T-cell (primary cell): ENCODE measurements at regions of chr15 and their contacts with region 1.

Region 1: GRCh38 chr15:78880242-78880533 is 7.5 kb downstream of the MORF4L1 start:
- DNase-seq: no peak
- ATAC-seq: no peak
- H3K4me3 ChIP-seq: no peak overlapping the region
- H3K4me3 Mint-ChIP-seq: no peak overlapping the region
- H3K27ac ChIP-seq: no peak overlapping the region
- H3K27ac Mint-ChIP-seq: no peak overlapping the region
- H3K4me1 ChIP-seq: peaks cover 37 to 42% of the 10 kb centered on the region in 2 experiments
- H3K4me1 Mint-ChIP-seq: peaks cover 80 to 87% (median 85%) of the 10 kb centered on the region in 3 donors
- H3K27me3 ChIP-seq: no peaks in the 10 kb centered on the region
- H3K27me3 Mint-ChIP-seq: no peaks in the 10 kb centered on the region

Region 2: GRCh38 chr15:78654272-78654671 is 225.9 kb before region 1 on chr15:
- CTCF ChIA-PET with region 1: no interaction called
- POLR2A ChIA-PET with region 1: no interaction called
- DNase-seq: no peak
- ATAC-seq: no peak
- H3K4me3 ChIP-seq: no peak overlapping the region
- H3K4me3 Mint-ChIP-seq: no peak overlapping the region
- H3K27ac ChIP-seq: no peak overlapping the region
- H3K27ac Mint-ChIP-seq: no peak overlapping the region
- H3K4me1 ChIP-seq: no peaks in the 10 kb centered on the region
- H3K4me1 Mint-ChIP-seq: no peaks in the 10 kb centered on the region
- H3K27me3 ChIP-seq: peaks cover 0 to 6% of the 10 kb centered on the region in 2 experiments
- H3K27me3 Mint-ChIP-seq: peaks cover 0 to 2% of the 10 kb centered on the region in 2 donors

Region 3: GRCh38 chr15:78906310-78906609 is 26.1 kb after region 1 on chr15:
- CTCF ChIA-PET with region 1: no interaction called
- POLR2A ChIA-PET with region 1: interaction called, 4 to 12 read pairs
- DNase-seq: no peak
- ATAC-seq: no peak
- H3K4me3 ChIP-seq: no peak overlapping the region
- H3K4me3 Mint-ChIP-seq: no peak overlapping the region
- H3K27ac ChIP-seq: no peak overlapping the region
- H3K27ac Mint-ChIP-seq: no peak overlapping the region
- H3K4me1 ChIP-seq: no peaks in the 10 kb centered on the region
- H3K4me1 Mint-ChIP-seq: peaks cover 21 to 33% (median 33%) of the 10 kb centered on the region in 3 donors
- H3K27me3 ChIP-seq: no peaks in the 10 kb centered on the region
- H3K27me3 Mint-ChIP-seq: no peaks in the 10 kb centered on the region